ENCODE measurements at regions of chr19 and their contacts with region 1.

Region 1: DNA sequence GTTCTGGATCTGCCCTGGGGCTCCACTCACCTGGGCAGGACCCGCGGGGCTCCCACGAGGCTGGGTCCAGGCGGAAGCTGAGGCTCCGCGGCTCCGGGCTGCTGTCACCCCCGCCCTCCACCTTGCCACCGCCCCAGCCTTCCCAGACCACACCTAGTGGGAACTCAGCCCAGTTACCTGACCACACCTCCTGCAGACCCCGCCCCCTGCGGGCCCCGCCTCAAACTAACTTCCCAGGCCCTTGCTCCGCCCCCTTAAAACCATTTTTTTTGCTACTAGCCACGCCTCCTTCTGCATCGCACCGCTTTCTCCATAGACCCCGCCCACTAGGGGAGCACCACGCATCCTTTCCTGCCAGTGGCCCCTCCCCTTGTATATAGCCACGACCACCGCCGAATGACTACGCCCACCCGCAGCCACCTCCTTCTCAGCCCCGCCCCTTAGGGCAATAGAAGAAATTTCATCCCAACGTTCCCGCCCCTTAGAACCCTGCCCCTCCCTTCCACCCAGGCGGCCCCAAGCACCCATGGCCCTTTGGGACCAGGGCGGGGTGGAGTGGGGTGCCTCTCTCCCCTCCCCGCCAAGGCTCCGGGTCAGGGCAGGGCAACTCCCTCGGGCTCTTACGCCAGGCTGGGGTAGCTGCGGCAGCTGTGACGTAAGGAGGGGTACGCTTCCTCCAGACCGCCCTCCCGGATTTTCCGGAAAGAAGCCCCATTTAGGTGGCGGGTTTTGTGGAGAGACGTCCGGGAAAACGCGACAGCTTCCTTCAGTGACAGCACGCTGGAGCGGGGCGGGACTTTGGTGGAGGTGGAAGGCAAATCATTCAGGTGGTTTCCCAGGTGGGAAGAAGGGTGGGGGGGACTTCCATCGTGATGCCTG is at the start of gene SH2D3A:
- DNase-seq: peak; percentile 96
- H3K4me3 ChIP-seq: peak within 1 kb of the TSS; percentile 75 to 86 (median 81)
- H3K27ac ChIP-seq: peak within 1 kb of the TSS; percentile 94
- H3K4me1 ChIP-seq: peaks cover 16% of the 10 kb centered on the region
- H3K27me3 ChIP-seq: no peaks in the 10 kb centered on the region
- CTCF ChIP-seq: no peak
- total RNA-seq, gene SH2D3A: 59.0 to 95.1 TPM

Region 2: DNA sequence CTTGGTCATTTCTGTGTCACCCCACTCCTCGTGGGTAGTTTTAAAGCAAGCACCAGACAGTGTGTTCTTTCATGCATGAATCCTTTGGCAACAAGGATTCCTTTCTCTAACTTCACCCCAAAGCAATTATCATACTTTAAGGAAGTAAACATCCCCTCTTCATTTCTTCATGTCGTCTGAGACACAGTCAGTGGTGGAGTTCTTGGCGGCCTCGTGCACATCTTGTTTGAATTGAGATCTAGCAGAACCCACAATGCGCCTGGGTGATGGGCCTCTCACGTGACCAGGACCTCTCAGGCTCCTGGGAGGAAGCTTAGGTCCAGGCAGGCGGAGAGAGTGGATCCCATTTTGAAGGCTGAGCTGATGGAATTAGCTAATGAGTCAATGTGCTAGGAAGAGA is 629.5 kb before region 1 on chr19:
- CTCF ChIA-PET with region 1: no interaction called
- dilution Hi-C with region 1: loop called (anchors 10 kb)
- in situ Hi-C with region 1: no loop called
- intact Hi-C with region 1: no loop called
- DNase-seq: no peak
- H3K4me3 ChIP-seq: no peak overlapping the region
- H3K27ac ChIP-seq: no peak overlapping the region
- H3K4me1 ChIP-seq: no peaks in the 10 kb centered on the region
- H3K27me3 ChIP-seq: no peaks in the 10 kb centered on the region
- CTCF ChIP-seq: no peak

Region 3: DNA sequence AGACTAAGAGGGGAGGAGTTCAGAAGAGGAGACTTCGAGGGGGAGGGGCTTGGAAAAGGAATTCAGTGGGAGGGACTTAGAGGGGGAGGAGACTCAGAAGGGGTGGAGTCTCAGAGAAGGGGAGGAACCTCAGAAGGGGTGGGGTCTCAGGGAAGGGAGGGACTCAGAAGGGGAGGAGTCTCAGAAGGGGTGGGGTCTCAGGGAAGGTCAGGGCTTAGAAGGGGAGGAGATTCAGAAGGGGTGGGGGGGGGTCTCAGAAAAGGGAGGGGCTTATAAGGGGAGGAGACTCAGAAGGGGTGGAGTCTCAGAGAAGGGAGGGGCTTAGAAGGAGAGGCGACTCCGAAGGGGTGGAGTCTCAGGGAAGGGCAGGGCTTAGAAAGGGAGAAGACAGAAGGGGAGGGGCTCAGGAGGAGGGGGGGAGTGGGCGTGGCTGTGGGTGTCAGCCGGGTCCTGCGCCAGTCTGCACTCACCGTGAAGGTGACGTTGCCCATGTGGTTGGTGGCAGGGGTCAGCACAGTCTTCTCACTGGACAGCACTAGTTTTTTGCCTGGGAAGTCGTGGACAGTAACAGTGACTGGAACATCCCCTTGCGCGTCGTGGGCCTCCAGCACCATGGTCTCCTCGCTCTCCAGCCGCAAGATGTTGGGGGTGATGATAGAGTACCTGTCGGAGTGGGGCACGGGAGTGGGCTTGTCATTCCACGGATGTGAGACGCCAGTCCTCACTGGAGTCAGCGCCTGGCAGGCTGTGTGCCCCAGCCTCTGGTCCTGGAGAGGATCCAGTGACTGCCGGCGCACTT is 48.7 kb before region 1 on chr19:
- CTCF ChIA-PET with region 1: no interaction called
- dilution Hi-C with region 1: loop called (anchors 5 kb)
- in situ Hi-C with region 1: no loop called
- intact Hi-C with region 1: no loop called
- DNase-seq: peak; percentile 23
- H3K4me3 ChIP-seq: peak overlapping the region in 1 of 3 experiments; percentile 31
- H3K27ac ChIP-seq: no peak overlapping the region
- H3K4me1 ChIP-seq: peaks cover 35% of the 10 kb centered on the region
- H3K27me3 ChIP-seq: no peaks in the 10 kb centered on the region
- CTCF ChIP-seq: no peak

Region 4: DNA sequence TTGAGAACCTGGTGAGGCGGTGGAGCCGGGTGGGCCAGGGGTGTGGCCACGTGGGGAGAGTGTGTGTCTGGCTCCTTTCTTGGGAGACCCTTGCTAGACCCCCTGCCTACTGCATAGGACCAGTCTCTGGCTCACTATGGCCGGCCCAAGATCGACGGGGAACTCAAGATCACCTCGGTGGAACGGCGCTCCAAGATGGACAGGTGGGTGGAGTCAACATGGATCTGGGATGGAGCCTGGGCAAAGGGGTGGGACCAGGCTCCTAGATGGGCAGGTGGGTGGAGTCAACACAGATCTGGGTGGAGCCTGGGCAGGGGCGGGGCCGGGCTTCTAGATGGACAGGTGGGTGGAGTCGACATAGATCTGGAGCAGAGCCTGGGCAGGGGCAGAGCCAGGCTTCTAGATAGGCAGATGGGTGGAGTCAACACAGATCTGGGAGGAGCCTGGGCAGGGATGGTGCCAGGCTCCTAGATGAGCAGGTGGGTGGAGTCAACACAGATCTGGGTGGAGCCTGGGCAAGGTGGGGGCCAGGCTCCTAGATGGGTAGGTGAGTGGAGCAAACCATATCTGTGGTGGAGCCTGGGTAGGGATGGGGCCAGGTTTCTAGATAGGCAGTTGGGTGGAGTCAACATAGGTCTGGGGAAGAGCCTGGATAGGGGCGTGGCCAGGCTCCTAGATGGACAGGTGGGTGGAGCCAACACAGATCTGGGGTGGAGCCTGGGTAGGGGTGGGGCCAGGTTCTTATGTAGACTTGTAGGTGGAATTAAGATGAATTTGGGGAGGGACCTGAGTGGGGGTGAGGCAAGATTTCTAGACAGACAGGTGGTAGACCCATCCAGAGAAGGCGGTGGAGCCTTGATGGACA is 61.3 kb after region 1 on chr19:
- CTCF ChIA-PET with region 1: no interaction called
- dilution Hi-C with region 1: no loop called
- in situ Hi-C with region 1: no loop called
- intact Hi-C with region 1: loop called (anchors 1 kb)
- DNase-seq: no peak
- H3K4me3 ChIP-seq: no peak overlapping the region
- H3K27ac ChIP-seq: no peak overlapping the region
- H3K4me1 ChIP-seq: no peaks in the 10 kb centered on the region
- H3K27me3 ChIP-seq: no peaks in the 10 kb centered on the region
- CTCF ChIP-seq: no peak

Measured in mammary epithelial cell (primary cell).